Activated CD4-positive, alpha-beta memory T cell treated with anti-CD3 and anti-CD28 coated beads for 36 hours (primary cell): ENCODE measurements at regions of chr19 and their contacts with region 1.

Region 1: DNA sequence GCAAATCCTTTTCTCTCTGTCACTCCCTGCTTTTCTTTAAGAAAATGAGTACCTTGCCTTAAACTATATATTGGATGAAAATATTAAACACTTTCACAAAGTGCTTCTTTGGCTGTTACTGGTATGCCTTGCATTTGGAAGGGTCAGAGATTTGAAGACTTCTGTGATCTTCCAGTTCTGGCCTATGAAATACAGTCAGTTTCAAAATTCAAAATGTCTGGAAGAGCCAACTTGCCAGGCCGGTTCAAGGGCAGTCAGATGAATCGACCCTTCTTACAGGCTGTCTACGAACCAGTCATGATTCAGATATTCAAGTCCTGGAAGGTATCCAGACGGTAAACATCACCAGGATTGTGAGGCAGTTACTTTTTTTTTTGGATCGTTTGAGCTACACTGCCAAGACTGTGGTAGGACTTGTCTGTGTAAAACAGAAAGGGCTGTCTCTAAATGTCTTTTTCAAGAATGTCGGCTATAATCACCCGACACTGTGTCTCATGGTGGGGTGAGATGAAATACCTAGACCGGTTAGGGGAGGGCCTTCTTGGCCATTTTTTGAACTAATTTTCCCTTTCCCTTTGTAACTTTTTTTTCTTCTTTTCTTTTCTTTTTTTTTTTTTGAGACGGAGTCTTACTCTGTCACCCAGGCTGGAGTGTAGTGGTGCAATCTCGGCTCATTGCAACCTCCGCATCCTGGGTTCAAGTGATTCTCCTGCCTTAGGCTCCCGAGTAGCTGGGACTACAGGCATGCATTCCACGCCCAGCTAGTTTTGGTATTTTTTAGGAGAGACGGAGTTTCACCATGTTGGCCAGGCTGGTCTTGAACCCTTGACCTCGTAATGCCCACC is 11.2 kb downstream of the ACTN4 start:
- DNase-seq: no peak
- H3K4me3 Mint-ChIP-seq: no peak overlapping the region
- H3K27ac Mint-ChIP-seq: no peak overlapping the region
- H3K4me1 Mint-ChIP-seq: peaks cover 69% of the 10 kb centered on the region
- H3K27me3 Mint-ChIP-seq: no peaks in the 10 kb centered on the region

Region 2: DNA sequence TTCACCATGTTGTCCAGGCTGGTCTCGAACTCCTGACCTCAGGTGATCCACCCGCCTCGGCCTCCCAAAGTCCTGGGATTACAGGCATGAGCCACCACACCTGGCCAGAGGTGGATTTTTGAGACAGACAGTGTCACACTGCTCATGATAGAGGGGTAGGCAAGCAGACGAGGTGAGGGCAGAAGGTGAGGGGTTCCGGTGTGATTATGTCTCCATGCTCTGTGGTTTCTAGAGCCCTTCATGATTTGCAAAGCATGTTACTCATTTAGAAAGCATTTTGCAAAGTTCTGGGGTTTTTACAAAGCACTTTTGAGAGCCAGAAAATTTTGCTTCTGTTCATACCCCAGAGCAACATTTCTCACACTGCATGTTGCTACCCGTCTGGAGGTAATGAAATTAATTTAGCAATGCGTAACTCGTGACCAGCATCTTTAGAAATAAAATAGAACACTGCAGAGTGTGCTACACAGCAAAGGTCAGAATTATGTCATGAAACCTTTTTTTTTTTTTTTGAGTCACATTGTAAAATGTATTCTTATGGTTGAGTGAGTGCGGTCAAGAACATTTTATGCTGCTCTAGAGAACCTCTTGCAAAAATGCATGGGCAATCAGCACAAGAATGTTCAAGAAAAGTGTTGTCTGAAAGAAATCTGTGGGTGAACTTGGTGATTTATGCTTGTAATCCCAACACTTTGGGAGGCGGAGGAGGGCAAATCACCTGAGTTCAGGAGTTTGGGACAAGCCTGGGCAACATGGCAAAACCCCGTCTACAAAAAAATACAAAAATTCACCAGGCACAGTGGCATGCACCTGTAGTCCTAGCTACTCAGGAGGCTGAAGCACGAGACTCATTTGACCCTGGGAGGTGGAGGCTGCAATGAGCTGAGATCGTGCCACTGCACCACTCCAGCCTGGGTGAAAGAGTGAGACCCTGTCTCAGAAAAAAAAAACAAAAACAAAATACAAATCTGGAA is 99.0 kb before region 1 on chr19:
- CTCF ChIA-PET with region 1: no interaction called
- POLR2A ChIA-PET with region 1: no interaction called
- intact Hi-C with region 1: loop called (anchors 1 kb)
- DNase-seq: peak; percentile 77
- H3K4me3 Mint-ChIP-seq: peak overlapping the region; percentile 49
- H3K27ac Mint-ChIP-seq: peak overlapping the region; percentile 88
- H3K4me1 Mint-ChIP-seq: peaks cover 58% of the 10 kb centered on the region
- H3K27me3 Mint-ChIP-seq: peaks cover 3% of the 10 kb centered on the region

Region 3: GRCh38 chr19:38683393-38684080 is 24.9 kb after region 1 on chr19:
- CTCF ChIA-PET with region 1: interaction called, 5 read pairs
- POLR2A ChIA-PET with region 1: interaction called, 3 read pairs
- intact Hi-C with region 1: loop called (anchors 1 kb)
- DNase-seq: peak; percentile 82
- H3K4me3 Mint-ChIP-seq: no peak overlapping the region
- H3K27ac Mint-ChIP-seq: peak overlapping the region; percentile 81
- H3K4me1 Mint-ChIP-seq: peaks cover 86% of the 10 kb centered on the region
- H3K27me3 Mint-ChIP-seq: no peaks in the 10 kb centered on the region

Region 4: GRCh38 chr19:38729653-38730469 is 71.2 kb after region 1 on chr19:
- CTCF ChIA-PET with region 1: interaction called, 3 read pairs
- POLR2A ChIA-PET with region 1: no interaction called
- intact Hi-C with region 1: loop called (anchors 5 kb)
- DNase-seq: peak; percentile 86
- H3K4me3 Mint-ChIP-seq: no peak overlapping the region
- H3K27ac Mint-ChIP-seq: peak overlapping the region; percentile 57
- H3K4me1 Mint-ChIP-seq: peaks cover 28% of the 10 kb centered on the region
- H3K27me3 Mint-ChIP-seq: no peaks in the 10 kb centered on the region

Region 5: GRCh38 chr19:38743394-38744295 is 85.0 kb after region 1 on chr19:
- CTCF ChIA-PET with region 1: no interaction called
- POLR2A ChIA-PET with region 1: no interaction called
- intact Hi-C with region 1: no loop called
- DNase-seq: no peak
- H3K4me3 Mint-ChIP-seq: no peak overlapping the region
- H3K27ac Mint-ChIP-seq: no peak overlapping the region
- H3K4me1 Mint-ChIP-seq: peaks cover 9% of the 10 kb centered on the region
- H3K27me3 Mint-ChIP-seq: no peaks in the 10 kb centered on the region